ENCODE measurements at regions of chr15 and their contacts with region 1.

Region 1: DNA sequence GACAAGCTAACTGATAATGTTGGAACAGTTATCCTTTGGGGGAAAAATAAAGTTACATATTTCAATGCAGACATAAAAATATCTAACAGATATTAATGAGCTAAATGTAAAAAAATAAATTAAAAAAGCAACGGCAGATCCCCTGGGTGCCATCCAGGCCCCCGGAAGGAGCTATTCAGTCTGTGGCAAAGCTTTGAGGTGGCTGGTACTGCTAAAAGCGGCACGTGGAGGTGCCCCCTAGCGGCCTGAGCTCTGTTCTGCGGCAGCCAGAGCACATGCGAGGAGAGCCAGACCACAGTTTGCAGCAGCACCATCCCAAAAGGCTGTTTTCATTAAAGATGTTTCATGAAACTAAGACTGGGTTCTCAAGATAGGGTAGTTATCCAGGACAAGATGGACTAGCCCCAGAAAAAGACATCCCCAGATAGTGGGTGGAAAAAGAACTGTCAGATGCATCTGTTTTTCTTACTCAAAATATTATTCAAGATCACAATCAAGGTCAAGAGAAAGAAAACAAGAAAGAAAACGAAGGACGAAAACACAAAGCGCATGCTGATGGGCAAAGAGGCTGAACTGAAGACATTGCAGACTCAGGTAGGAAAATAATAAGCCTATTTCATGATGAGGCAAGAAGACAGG is 18.7 kb downstream of the AP3S2 start:
- DNase-seq: peak; percentile 92
- ATAC-seq: peak; percentile 100
- H3K4me3 Mint-ChIP-seq: no peak overlapping the region
- H3K27ac Mint-ChIP-seq: peak overlapping the region; percentile 51
- H3K4me1 Mint-ChIP-seq: peaks cover 4% of the 10 kb centered on the region
- H3K27me3 Mint-ChIP-seq: no peaks in the 10 kb centered on the region

Region 2: DNA sequence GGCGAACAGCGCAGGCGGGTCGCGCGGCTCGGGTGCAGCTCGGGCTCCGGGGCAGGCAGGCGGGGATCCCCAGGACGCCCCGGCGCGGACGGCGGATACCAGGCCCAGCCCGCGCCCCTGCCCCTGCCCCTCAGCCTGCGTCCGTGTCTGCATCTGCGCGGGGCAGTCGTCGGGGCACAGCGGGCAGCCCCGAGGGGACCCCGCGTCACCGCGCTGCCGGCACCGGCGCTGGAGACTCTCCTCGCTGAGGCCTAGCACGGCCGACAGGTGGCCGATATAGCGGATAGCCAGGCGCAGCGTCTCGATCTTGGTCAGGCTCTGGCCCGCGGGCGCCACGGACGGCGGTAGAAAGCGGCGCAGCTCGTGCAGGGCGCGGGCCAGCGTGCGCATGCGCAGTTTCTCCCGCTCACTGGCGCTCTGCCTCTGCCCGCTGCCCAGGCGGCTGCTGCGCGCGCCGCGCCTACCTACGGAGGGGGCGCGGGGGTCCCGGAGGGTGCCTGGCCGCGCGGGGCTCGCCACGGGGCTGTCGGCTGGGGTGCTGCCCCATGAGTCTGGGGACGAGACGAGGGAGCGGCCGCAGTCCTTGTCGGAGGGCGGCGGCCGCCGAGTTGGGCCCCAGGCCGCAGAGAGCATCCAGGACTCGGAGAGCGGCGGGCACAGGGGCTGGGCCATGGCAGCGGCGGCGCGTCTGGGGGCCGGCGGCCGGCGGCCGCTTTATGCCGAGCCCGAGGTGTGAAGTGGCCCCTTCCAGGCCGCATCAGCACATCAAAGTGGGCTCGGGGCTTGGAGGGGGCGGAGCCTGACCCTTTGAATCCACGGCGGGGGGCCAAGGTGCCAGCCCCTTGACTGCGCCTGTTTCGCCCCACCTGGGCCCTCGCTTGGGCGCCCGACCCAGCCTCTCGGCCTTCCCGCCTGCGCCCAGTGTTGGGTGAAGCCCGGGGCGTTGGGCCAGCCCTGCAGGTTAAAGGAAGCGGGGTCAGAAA is 124.2 kb before region 1 on chr15 and contains the start of gene MESP1:
- CTCF ChIA-PET with region 1: interaction called, 10 read pairs
- POLR2A ChIA-PET with region 1: interaction called, 5 read pairs
- intact Hi-C with region 1: no loop called
- DNase-seq: peak; percentile 93
- ATAC-seq: peak; percentile 94
- H3K4me3 Mint-ChIP-seq: peak within 1 kb of the TSS; percentile 73
- H3K27ac Mint-ChIP-seq: no peak within 1 kb of the TSS
- H3K4me1 Mint-ChIP-seq: peaks cover 4% of the 10 kb centered on the region
- H3K27me3 Mint-ChIP-seq: peaks cover 11% of the 10 kb centered on the region
- total RNA-seq, gene MESP1: 2.9 to 4.6 TPM

Region 3: GRCh38 chr15:89760303-89761008 is 114.6 kb before region 1 on chr15:
- CTCF ChIA-PET with region 1: interaction called, 82 read pairs
- POLR2A ChIA-PET with region 1: interaction called, 4 read pairs
- intact Hi-C with region 1: loop called (anchors 1 to 2 kb)
- DNase-seq: peak; percentile 85
- ATAC-seq: peak; percentile 88
- H3K4me3 Mint-ChIP-seq: no peak overlapping the region
- H3K27ac Mint-ChIP-seq: no peak overlapping the region
- H3K4me1 Mint-ChIP-seq: no peaks in the 10 kb centered on the region
- H3K27me3 Mint-ChIP-seq: peaks cover 6% of the 10 kb centered on the region

Region 4: DNA sequence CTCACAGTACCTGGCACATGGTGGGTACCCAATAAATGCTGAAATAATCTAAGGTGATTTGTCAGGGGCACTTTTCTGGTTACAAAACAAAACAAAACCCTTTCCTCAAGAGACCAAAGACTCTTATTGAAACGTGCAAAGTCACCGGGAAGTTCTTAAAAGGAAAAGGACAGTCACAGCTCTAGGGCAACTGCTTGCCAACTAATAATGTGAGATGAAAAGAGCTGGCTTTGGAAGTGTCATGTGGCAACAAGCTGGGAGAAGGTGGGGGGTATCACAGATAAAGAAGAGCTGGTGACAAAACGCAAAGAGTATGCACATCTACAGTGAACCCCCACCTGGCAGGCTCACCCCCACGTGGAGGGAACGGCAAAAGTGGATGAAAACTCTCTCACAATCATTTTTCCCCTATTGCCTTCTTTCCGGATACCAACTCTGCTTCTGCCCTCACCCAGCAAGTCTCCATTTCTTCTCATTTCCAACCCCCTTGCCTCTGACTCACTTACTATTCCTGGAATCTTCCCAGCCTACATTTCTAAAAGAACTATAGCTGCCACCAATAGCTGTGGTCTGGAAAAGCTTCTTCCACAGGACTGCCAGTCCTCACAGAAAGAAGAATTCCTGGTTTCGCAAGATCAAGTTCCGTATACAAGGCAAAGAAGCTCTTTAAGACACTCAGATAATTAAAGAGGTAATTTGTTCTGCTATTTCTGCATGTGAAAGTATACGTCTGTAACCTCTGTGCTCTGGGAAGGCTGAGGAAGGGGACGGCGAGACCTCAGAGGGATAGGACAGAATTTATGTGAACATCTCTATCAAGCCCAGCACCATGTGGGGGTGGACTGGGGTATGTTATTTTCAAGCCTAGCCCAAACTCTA is 38.6 kb before region 1 on chr15:
- CTCF ChIA-PET with region 1: interaction called, 13 read pairs
- POLR2A ChIA-PET with region 1: no interaction called
- intact Hi-C with region 1: no loop called
- DNase-seq: no peak
- ATAC-seq: no peak
- H3K4me3 Mint-ChIP-seq: no peak overlapping the region
- H3K27ac Mint-ChIP-seq: no peak overlapping the region
- H3K4me1 Mint-ChIP-seq: peaks cover 3% of the 10 kb centered on the region
- H3K27me3 Mint-ChIP-seq: no peaks in the 10 kb centered on the region

Region 5: GRCh38 chr15:89863918-89864317 is 11.1 kb before region 1 on chr15:
- CTCF ChIA-PET with region 1: interaction called, 32 read pairs
- POLR2A ChIA-PET with region 1: no interaction called
- intact Hi-C with region 1: no loop called
- DNase-seq: no peak
- ATAC-seq: no peak
- H3K4me3 Mint-ChIP-seq: no peak overlapping the region
- H3K27ac Mint-ChIP-seq: no peak overlapping the region
- H3K4me1 Mint-ChIP-seq: no peaks in the 10 kb centered on the region
- H3K27me3 Mint-ChIP-seq: no peaks in the 10 kb centered on the region

Region 6: GRCh38 chr15:89888214-89888804 is 13.3 kb after region 1 on chr15:
- CTCF ChIA-PET with region 1: interaction called, 51 read pairs
- POLR2A ChIA-PET with region 1: interaction called, 5 read pairs
- intact Hi-C with region 1: no loop called
- DNase-seq: no peak
- ATAC-seq: no peak
- H3K4me3 Mint-ChIP-seq: no peak overlapping the region
- H3K27ac Mint-ChIP-seq: peak overlapping the region; percentile 35
- H3K4me1 Mint-ChIP-seq: peaks cover 32% of the 10 kb centered on the region
- H3K27me3 Mint-ChIP-seq: no peaks in the 10 kb centered on the region

Region 7: GRCh38 chr15:90789462-90789861 is 914.4 kb after region 1 on chr15:
- CTCF ChIA-PET with region 1: no interaction called
- POLR2A ChIA-PET with region 1: no interaction called
- intact Hi-C with region 1: no loop called
- DNase-seq: no peak
- ATAC-seq: no peak
- H3K4me3 Mint-ChIP-seq: no peak overlapping the region
- H3K27ac Mint-ChIP-seq: no peak overlapping the region
- H3K4me1 Mint-ChIP-seq: no peaks in the 10 kb centered on the region
- H3K27me3 Mint-ChIP-seq: no peaks in the 10 kb centered on the region

Measured in activated CD4-positive, alpha-beta T cell treated with anti-CD3 and anti-CD28 coated beads for 36 hours (primary cell).